Cardiac septum (tissue), 1 donor: ENCODE measurements at regions of chr1 and their contacts with region 1.

Region 1: GRCh38 chr1:187476671-187477070 is 647.9 kb downstream of the PLA2G4A start:
- DNase-seq: no peak

Region 2: DNA sequence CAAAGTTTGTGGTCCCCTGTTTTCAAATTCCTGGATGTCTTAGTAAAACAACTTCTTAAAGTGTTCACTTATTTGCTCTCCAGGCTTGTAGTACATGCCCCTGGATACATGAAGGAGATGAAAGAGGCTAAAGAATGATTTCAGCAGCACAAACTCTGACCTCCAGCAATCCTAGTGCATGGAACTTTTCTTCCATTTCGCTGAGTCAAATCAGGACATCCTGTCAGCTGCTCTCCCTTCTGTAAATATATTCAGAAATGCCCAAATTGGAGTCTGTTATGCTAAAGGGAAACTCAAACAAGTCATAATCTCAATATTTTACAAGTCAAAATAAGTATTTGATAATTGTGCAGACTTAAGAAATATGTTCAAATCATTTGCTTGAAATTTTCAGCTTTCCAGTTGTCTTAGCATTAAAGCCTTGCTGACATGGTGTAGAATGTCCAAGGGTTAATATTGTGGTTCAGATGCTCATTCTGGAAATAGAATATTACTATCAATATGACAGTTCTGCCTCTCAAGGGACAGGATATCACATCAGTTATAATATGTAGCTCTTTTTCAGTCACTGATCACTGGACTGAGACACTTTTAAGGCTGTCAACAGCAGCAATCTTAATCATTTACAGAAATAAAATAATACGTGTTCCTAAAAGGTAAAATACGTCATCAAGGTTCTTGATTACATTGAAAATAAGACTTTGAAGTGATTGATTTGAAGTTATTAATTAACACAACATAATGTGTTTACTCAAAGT is 509.4 kb after region 1 on chr1:
- intact Hi-C with region 1: no loop called
- DNase-seq: no peak

Region 3: GRCh38 chr1:187999973-188000372 is 523.3 kb after region 1 on chr1:
- intact Hi-C with region 1: loop called (anchors 5 kb)
- DNase-seq: no peak

Region 4: DNA sequence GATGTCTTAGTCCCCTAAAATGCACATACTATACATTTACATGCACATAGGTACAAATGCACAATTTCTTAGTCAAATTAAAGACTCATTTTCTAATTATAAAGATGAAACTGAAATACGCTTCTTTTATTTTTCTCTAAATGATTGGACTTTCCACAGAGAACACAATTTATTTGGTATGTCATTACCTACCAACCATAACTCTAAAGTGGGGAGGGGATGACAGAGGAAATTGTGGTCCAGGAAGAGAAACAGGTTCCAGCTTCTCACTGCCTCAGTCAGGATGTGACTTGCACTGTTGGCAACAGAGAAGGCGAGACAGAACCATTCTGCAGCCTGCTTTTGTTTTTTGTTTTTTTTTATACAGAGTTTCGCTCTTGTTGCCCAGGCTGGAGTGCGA is 541.2 kb after region 1 on chr1:
- intact Hi-C with region 1: no loop called
- DNase-seq: no peak